ENCODE measurements at regions of chr1 and their contacts with region 1.

Region 1: DNA sequence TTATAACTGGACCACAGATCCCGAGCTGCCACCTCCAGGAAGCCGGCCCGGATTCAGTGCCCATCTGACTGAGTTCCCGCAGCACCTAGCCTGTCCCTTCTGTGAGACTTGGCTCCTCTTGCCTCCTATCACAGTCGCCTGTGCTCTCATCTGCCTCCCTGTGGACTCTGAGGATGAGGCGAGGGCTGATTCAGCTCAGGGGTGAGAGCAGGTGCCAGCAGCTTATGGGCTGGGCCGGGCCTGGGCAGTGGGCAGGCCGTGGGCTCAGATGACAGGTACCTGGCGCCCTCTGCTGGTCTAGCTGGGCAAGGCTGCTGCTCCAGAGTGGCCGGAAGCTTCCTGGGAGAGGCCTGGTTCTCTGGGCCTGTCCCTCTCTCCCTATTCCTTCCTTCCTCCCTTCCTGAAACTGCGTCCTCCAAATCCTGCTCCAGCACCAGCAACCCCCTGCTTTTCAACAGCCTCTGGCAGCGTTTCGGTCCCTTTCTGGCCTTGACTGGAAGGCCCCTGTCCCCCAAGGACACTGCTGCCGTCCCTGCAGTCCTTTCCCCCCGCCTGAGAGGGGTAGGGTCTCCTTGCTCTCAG is 17.3 kb upstream of the PCSK9 start:
- DNase-seq: peak; percentile 98

Region 2: DNA sequence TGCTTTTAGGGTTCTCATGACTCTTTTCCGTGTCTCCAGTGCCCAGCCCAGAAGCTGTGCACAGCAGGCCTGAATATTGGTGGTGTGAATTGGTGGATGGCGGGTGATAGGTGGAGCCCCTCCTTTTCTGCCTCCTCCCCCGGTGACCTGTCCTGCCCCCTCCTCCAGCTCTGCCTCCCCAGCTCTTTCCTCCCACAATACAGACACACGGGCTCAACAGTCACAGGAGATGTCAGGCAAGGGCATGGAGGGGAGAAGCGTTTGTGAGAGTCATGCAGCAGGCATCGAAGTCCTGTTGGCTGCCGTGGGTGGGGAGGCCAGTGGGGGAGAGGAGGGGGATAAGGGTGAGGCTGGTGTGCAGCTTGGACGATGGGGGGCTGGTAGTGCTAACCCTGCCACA is 323.7 kb before region 1 on chr1:
- CTCF ChIA-PET with region 1: no interaction called
- POLR2A ChIA-PET with region 1: no interaction called
- DNase-seq: no peak

Region 3: GRCh38 chr1:55033265-55033614 is 11.2 kb after region 1 on chr1:
- CTCF ChIA-PET with region 1: interaction called, 12 read pairs
- POLR2A ChIA-PET with region 1: no interaction called
- DNase-seq: no peak

Measured in HEK293T (cell line).